MCF 10A (cell line): ENCODE measurements at regions of chr12 and their contacts with region 1.

Region 1: DNA sequence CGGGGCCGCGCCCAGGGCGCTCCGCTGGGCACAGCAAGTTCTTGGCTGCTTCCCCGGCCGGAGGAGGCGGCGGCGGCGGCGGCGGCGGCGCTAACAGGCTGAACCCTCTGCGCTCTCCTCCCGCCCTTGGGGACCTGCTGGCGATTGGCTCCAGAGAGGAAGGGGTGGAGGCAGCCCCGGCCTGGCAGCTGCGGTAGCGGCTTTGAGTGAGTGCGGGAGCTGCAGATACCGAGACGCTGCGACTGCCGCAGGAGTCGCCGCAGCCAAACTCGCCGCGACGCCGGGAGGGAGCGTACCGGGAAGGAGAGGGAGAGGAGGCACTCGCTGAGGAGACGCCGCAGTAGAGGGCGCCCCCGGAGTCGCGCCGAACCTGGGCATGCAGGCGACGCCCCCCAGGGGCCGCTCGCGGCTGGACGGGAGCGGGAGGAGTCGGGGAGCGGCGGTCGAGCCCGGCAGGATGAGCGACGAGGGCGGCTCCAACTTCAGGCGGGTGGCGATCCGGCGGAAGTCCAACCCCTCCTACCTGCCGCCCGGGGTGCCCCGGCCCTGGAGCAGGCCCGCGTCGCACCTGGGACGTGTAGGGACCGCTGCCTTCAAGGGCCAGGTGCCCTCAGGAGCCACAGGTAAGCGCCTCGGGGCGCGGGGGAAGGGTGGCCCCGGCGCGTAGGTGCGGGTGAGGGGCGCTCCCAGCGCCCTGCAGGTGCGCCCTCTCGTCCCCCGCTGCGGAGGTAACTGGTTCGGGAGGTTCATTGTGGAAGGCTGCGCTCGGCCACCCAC is at the start of gene FGD4:
- DNase-seq: peak; percentile 96
- H3K4me3 Mint-ChIP-seq: peak within 1 kb of the TSS; percentile 79
- H3K27ac Mint-ChIP-seq: peak within 1 kb of the TSS; percentile 92
- H3K4me1 Mint-ChIP-seq: peaks cover 19% of the 10 kb centered on the region
- H3K27me3 Mint-ChIP-seq: no peaks in the 10 kb centered on the region
- CTCF ChIP-seq: peak; percentile 41
- total RNA-seq, gene FGD4: 32.5 and 34.7 TPM in 2 replicates

Region 2: GRCh38 chr12:32437095-32437515 is 37.6 kb after region 1 on chr12:
- CTCF ChIA-PET with region 1: interaction called, 15 read pairs
- POLR2A ChIA-PET with region 1: interaction called, 19 read pairs
- intact Hi-C with region 1: no loop called
- DNase-seq: peak; percentile 91
- H3K4me3 Mint-ChIP-seq: peak overlapping the region; percentile 38
- H3K27ac Mint-ChIP-seq: peak overlapping the region; percentile 93
- H3K4me1 Mint-ChIP-seq: peaks cover 63% of the 10 kb centered on the region
- H3K27me3 Mint-ChIP-seq: no peaks in the 10 kb centered on the region
- CTCF ChIP-seq: no peak

Region 3: DNA sequence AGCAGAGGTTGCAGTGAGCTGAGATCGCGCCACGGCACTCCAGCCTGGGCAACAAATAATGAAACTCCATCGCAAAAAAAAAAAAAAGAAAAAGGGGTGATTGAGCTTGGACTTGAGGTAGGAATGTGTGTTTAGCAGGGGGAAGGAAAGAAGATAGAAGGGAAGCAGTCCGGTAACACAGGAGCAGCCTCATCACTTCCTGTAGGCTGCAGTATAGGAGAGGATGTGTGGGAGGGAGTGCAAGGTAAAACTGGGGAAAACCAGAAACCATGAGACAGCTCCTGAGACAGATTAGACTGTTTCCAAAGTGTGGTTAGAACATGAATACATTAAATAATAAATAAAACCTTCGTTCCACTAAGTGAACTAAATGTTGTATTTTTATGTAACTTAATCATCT is 49.1 kb after region 1 on chr12:
- CTCF ChIA-PET with region 1: interaction called, 5 read pairs
- POLR2A ChIA-PET with region 1: interaction called, 22 read pairs
- intact Hi-C with region 1: no loop called
- DNase-seq: peak; percentile 55
- H3K4me3 Mint-ChIP-seq: peak overlapping the region; percentile 6
- H3K27ac Mint-ChIP-seq: peak overlapping the region; percentile 77
- H3K4me1 Mint-ChIP-seq: peaks cover 63% of the 10 kb centered on the region
- H3K27me3 Mint-ChIP-seq: no peaks in the 10 kb centered on the region
- CTCF ChIP-seq: no peak

Region 4: GRCh38 chr12:32516230-32516629 is 116.7 kb after region 1 on chr12:
- CTCF ChIA-PET with region 1: no interaction called
- POLR2A ChIA-PET with region 1: no interaction called
- intact Hi-C with region 1: no loop called
- DNase-seq: no peak
- H3K4me3 Mint-ChIP-seq: no peak overlapping the region
- H3K27ac Mint-ChIP-seq: no peak overlapping the region
- H3K4me1 Mint-ChIP-seq: peaks cover 9% of the 10 kb centered on the region
- H3K27me3 Mint-ChIP-seq: no peaks in the 10 kb centered on the region
- CTCF ChIP-seq: no peak

Region 5: DNA sequence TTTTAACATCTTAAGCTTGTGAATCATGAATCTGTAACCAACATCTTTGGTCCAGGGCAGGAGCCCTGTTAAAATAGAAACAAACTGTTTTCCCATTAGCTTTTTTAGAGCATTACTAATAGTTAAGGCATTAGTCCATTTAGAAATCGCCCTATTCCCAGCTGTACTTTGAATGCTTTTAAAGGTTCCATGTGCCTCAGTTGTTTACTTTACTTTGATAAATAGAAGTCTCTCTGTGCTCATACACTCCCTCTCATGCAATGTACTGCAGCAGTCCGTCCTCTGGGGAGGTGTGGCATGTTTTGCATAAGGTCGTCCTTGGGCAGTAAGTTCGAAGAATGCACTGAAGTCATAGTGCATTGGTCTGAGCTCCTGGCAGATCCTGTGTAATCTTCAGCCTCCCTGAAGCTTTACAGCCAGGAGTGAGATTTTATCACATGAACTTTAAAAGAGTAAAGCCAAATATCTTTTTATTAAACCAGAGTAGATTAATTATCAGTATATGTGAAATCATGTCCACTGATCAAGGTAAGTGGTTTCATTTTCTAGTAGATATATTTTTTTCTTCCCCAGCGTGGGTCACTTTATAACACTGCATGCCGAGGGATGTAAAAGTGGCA is 134.6 kb after region 1 on chr12:
- CTCF ChIA-PET with region 1: interaction called, 8 read pairs
- POLR2A ChIA-PET with region 1: interaction called, 17 read pairs
- intact Hi-C with region 1: no loop called
- DNase-seq: peak; percentile 76
- H3K4me3 Mint-ChIP-seq: peak overlapping the region; percentile 65
- H3K27ac Mint-ChIP-seq: peak overlapping the region; percentile 63
- H3K4me1 Mint-ChIP-seq: peaks cover 43% of the 10 kb centered on the region
- H3K27me3 Mint-ChIP-seq: no peaks in the 10 kb centered on the region
- CTCF ChIP-seq: no peak

Region 6: DNA sequence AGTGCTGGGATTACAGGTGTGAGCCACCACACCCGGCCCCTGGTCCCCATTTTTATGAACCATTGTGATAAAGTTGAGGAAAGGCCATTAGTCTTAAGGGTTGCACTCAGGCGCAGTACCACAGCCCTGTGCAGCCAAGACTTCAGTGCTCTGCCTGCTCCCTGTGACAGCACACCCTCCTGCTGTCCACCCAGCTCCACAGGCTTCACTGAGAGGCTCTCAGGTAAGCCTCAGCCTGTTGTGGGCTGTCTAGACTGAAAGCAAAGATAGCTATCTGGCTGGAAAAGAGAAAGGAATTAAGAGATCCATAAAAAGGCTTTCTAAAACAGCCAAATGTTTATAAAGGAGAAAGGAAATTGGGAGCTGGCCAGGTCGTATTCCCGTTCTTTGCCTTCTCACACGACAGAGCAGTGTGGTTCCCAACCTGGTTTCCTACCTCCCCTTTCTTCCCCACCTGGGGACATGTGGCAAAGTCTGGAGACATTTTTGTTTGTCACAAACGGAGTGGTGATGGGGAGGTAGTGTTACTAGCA is 260.4 kb after region 1 on chr12:
- CTCF ChIA-PET with region 1: interaction called, 11 read pairs
- POLR2A ChIA-PET with region 1: no interaction called
- intact Hi-C with region 1: no loop called
- DNase-seq: no peak
- H3K4me3 Mint-ChIP-seq: no peak overlapping the region
- H3K27ac Mint-ChIP-seq: no peak overlapping the region
- H3K4me1 Mint-ChIP-seq: no peaks in the 10 kb centered on the region
- H3K27me3 Mint-ChIP-seq: no peaks in the 10 kb centered on the region
- CTCF ChIP-seq: no peak

Region 7: DNA sequence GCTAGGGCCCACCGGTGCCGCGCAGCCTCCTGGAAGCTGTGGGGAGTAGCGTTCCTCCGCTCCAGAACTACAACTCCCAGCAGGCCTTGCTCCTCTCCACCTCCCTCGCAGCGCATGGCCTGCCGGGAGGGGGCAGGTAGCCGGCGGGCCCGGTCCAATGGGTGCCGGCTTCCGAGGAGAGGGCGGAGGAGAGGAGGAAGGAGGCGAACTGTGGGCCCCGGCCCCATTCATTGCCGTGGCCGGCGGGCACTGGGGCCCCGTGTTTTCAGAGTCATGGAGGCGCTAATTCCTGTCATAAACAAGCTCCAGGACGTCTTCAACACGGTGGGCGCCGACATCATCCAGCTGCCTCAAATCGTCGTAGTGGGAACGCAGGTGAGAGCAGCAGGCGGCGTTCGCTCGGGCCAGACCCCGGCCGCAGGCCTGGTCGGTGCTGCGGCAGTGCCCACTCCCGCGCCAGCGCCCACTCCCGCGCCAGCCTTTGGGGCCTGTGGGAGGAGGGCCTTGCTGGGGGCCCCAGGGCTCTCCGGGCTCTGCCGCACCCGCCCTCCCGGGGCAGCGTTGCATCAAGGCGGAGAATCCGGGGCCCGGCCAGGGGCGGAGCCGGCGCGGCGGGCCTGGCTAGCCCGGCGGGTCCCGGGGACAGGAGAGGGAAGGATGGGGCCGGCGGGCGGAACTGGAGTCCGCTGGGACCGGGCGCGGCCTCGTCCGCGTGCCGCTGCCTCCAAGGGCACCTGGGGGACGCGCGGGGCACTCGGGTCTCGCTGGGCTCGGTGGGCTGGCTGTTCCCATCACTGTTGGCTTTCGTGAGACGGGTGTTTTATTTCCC is 279.8 kb after region 1 on chr12 and contains the start of gene DNM1L:
- CTCF ChIA-PET with region 1: no interaction called
- POLR2A ChIA-PET with region 1: interaction called, 17 read pairs
- intact Hi-C with region 1: no loop called
- DNase-seq: peak; percentile 97
- H3K4me3 Mint-ChIP-seq: peak within 1 kb of the TSS; percentile 92
- H3K27ac Mint-ChIP-seq: peak within 1 kb of the TSS; percentile 91
- H3K4me1 Mint-ChIP-seq: peaks cover 9% of the 10 kb centered on the region
- H3K27me3 Mint-ChIP-seq: no peaks in the 10 kb centered on the region
- CTCF ChIP-seq: no peak
- total RNA-seq, gene DNM1L: 72.5 and 86.9 TPM in 2 replicates